Natural killer cell (primary cell): ENCODE measurements at regions of chr9 and their contacts with region 1.

Region 1: GRCh38 chr9:128322404-128323211 is at the starts of genes COQ4 and TRUB2:
- DNase-seq: peak; percentile 88 to 96
- ATAC-seq: peak; percentile 88 to 95 (median 90)
- H3K4me3 ChIP-seq: peak within 1 kb of the TSS; percentile 95
- H3K4me3 Mint-ChIP-seq: peak within 1 kb of the TSS; percentile 95
- H3K27ac ChIP-seq: peak within 1 kb of the TSS; percentile 92
- H3K27ac Mint-ChIP-seq: peak within 1 kb of the TSS; percentile 94 to 95
- H3K4me1 ChIP-seq: peaks cover 28% of the 10 kb centered on the region
- H3K4me1 Mint-ChIP-seq: peaks cover 19 to 20% of the 10 kb centered on the region in 2 donors
- H3K27me3 ChIP-seq: no peaks in the 10 kb centered on the region
- H3K27me3 Mint-ChIP-seq: no peaks in the 10 kb centered on the region
- CTCF ChIP-seq: no peak
- total RNA-seq, gene COQ4: 28.2 to 34.5 (median 30.4) TPM
- total RNA-seq, gene TRUB2: 8.8 to 12.0 (median 11.3) TPM

Region 2: DNA sequence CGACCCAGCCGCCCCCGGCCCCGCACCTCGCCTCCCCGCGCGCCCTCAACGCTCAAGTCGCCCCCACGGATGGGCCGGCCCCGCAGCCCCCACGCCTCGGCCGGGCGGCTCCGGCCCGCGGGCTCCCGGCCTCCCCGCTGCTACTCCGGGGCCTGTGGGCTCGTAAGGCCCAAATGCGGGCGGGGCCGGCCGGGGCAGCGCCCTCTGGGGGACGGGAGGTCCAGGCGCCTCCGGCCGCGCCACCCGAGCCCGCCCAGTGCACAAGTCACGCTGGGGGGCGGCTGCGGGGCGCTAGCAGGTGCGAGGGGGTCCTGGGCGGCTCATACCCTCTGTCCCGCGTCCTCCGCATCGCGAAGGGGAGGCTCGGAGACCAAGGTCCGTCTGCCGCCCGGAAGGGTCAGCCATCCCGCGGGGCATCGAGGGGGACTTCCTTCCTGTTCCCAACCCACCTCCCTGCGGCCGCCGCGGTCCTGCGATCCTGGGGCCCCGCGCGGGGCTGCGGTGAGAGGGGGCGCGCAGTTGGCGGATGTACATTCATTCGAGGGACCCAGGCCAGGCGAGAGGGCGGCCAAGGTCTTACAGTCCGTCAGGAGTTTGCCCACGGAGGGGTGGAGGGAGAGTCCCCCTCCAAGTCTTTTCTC is 131.1 kb before region 1 on chr9 and contains the start of gene CIZ1:
- intact Hi-C with region 1: loop called (anchors 10 kb)
- DNase-seq: peak; percentile 77 to 86
- ATAC-seq: peak; percentile 85 to 96 (median 92)
- H3K4me3 ChIP-seq: peak within 1 kb of the TSS; percentile 83
- H3K4me3 Mint-ChIP-seq: peak within 1 kb of the TSS; percentile 96
- H3K27ac ChIP-seq: peak within 1 kb of the TSS; percentile 63
- H3K27ac Mint-ChIP-seq: peak within 1 kb of the TSS; percentile 82 to 90
- H3K4me1 ChIP-seq: peaks cover 24% of the 10 kb centered on the region
- H3K4me1 Mint-ChIP-seq: peaks cover 13 to 30% of the 10 kb centered on the region in 2 donors
- H3K27me3 ChIP-seq: no peaks in the 10 kb centered on the region
- H3K27me3 Mint-ChIP-seq: no peaks in the 10 kb centered on the region
- CTCF ChIP-seq: peak; percentile 73
- total RNA-seq, gene CIZ1: 152 to 165 (median 159) TPM

Region 3: DNA sequence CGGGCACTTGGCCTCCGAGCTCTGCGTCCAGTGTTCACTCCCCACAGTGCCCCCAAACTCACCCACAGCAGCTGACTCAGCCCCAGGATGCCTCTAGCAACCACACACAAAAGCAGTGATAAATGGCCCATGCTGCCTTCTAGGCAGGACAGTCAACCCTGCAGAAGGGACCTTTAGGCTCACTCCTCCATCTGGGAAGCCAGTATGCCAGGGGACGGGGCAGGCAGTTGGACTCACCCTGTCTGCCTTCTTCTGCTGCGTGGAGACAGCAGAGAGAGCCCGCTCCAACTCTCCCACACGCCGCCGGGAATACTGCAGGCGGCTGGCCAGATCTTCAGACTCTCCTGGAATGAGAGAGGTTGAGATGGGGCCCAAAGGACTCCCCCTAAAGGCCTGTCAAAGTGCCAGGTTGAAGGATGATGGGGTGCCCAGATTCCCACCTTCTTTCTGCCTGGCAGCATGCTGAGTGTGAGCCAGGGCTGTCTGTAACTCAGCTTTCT is 57.2 kb before region 1 on chr9:
- intact Hi-C with region 1: no loop called
- DNase-seq: no peak
- ATAC-seq: no peak
- H3K4me3 ChIP-seq: no peak overlapping the region
- H3K4me3 Mint-ChIP-seq: no peak overlapping the region
- H3K27ac ChIP-seq: no peak overlapping the region
- H3K27ac Mint-ChIP-seq: no peak overlapping the region
- H3K4me1 ChIP-seq: no peaks in the 10 kb centered on the region
- H3K4me1 Mint-ChIP-seq: peaks cover 0 to 6% of the 10 kb centered on the region in 2 donors
- H3K27me3 ChIP-seq: no peaks in the 10 kb centered on the region
- H3K27me3 Mint-ChIP-seq: no peaks in the 10 kb centered on the region
- CTCF ChIP-seq: no peak

Region 4: GRCh38 chr9:128275996-128276573 is 46.5 kb before region 1 on chr9 and contains the starts of genes GOLGA2 and SWI5:
- intact Hi-C with region 1: loop called (anchors 5 kb)
- DNase-seq: peak; percentile 99 to 100
- ATAC-seq: peak; percentile 92 to 99 (median 93)
- H3K4me3 ChIP-seq: peak within 1 kb of the TSS; percentile 71
- H3K4me3 Mint-ChIP-seq: peak within 1 kb of the TSS; percentile 92
- H3K27ac ChIP-seq: peak within 1 kb of the TSS; percentile 80
- H3K27ac Mint-ChIP-seq: peak within 1 kb of the TSS; percentile 91 to 99
- H3K4me1 ChIP-seq: peaks cover 23% of the 10 kb centered on the region
- H3K4me1 Mint-ChIP-seq: peaks cover 21 to 33% of the 10 kb centered on the region in 2 donors
- H3K27me3 ChIP-seq: no peaks in the 10 kb centered on the region
- H3K27me3 Mint-ChIP-seq: peaks cover 0 to 2% of the 10 kb centered on the region in 2 donors
- CTCF ChIP-seq: no peak
- total RNA-seq, gene GOLGA2: 78.0 to 101 (median 90.9) TPM
- total RNA-seq, gene SWI5: 6.3 to 9.3 (median 8.4) TPM

Region 5: DNA sequence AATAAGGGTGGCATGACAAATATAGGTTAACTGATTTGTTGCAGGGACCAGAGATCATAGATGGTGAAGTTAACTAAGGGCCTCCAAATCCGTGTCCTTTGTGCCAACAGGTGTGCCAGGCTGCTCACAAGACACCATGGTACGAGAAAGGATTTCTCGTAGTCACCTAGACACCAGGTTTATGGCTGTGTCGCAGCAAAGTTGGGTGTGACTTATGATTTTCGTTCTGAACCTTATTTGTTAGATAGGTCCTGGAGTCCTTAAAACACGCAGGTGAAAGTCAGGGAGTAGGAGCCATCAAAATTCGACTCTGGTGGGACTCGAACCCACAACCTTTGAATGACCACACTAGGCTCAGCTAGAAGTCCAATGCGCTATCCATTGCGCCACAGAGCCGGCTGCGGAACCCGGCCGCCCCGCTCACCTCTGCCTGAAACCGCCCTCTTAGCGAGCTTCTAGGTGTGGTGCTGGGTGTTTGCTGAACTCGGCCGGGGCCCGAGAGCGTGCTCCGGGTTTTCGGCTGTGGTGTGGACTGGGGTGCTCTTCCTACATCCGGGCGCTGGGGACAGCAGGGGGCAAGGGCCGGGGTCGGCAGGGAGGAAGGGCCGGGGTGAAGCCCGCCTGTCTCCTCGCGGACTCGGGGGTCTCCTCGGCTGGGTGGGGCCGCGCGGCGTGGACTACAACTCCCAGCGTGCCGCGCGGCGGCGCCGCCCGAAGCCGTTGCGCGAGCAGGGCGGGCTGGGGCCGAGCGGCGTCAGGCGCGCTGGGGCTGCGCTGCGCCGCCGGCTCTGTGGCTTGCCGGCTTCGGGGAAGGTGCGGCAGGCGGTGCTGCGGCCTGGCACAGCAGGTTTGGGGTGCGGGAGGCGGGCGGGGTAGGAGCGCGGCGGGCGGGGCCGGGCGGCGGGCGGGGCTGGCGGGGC is 17.4 kb after region 1 on chr9 and contains the start of gene SLC27A4:
- intact Hi-C with region 1: loop called (anchors 1 kb)
- DNase-seq: peak; percentile 64 to 92
- ATAC-seq: peak; percentile 90 to 95 (median 93)
- H3K4me3 ChIP-seq: peak within 1 kb of the TSS; percentile 61
- H3K4me3 Mint-ChIP-seq: peak within 1 kb of the TSS; percentile 83
- H3K27ac ChIP-seq: peak within 1 kb of the TSS; percentile 49
- H3K27ac Mint-ChIP-seq: peak within 1 kb of the TSS; percentile 37 to 75
- H3K4me1 ChIP-seq: peaks cover 15% of the 10 kb centered on the region
- H3K4me1 Mint-ChIP-seq: peaks cover 7% of the 10 kb centered on the region in 2 donors
- H3K27me3 ChIP-seq: no peaks in the 10 kb centered on the region
- H3K27me3 Mint-ChIP-seq: no peaks in the 10 kb centered on the region
- CTCF ChIP-seq: no peak
- total RNA-seq, gene SLC27A4: 7.7 to 12.3 (median 11.2) TPM

Region 6: DNA sequence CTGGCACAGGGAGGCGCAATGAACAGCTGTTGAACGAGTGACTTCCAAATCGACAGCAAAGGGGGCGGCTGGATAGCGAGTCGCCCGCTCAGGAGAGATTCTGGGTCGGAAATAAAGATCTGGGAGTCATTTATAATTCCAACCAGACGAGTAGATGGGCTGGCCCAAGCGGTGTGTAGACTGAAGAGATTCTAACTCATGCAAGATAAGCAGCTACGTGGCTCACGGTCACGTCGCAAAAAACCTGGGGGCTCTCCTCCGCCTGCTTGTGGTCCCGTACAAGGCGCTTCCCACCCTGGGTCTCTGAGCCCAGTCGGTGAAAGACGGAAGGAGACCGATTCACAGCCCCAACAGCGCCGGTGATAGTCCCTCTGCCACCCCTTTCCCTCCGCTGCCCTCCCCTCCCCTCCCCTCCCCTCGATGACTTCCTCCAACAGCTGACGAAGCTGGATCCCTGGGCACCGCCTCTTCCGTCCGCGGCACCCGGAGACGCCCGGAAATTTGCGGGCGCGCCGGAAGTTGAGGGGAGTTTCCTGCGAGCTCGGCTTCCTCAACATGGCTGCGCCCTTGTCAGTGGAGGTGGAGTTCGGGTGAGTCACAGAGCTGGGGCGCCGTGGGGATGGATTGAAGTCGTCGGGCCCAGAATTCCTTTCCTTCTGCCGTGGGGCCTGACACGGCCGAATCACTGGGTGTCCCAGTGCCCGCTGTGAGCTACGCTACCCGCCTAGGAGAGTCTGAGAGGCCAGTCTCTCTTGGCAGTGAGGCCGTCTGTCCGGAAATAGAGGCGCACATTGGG is 48.4 kb after region 1 on chr9 and contains the start of gene URM1:
- intact Hi-C with region 1: loop called (anchors 1 kb)
- DNase-seq: peak; percentile 95 to 98
- ATAC-seq: peak; percentile 94 to 99 (median 96)
- H3K4me3 ChIP-seq: peak within 1 kb of the TSS; percentile 72
- H3K4me3 Mint-ChIP-seq: peak within 1 kb of the TSS; percentile 96
- H3K27ac ChIP-seq: peak within 1 kb of the TSS; percentile 82
- H3K27ac Mint-ChIP-seq: peak within 1 kb of the TSS; percentile 96 to 99
- H3K4me1 ChIP-seq: peaks cover 21% of the 10 kb centered on the region
- H3K4me1 Mint-ChIP-seq: peaks cover 29 to 31% of the 10 kb centered on the region in 2 donors
- H3K27me3 ChIP-seq: no peaks in the 10 kb centered on the region
- H3K27me3 Mint-ChIP-seq: peaks cover 0 to 2% of the 10 kb centered on the region in 2 donors
- CTCF ChIP-seq: no peak
- total RNA-seq, gene URM1: 39.4 to 47.8 (median 46.7) TPM

Region 7: DNA sequence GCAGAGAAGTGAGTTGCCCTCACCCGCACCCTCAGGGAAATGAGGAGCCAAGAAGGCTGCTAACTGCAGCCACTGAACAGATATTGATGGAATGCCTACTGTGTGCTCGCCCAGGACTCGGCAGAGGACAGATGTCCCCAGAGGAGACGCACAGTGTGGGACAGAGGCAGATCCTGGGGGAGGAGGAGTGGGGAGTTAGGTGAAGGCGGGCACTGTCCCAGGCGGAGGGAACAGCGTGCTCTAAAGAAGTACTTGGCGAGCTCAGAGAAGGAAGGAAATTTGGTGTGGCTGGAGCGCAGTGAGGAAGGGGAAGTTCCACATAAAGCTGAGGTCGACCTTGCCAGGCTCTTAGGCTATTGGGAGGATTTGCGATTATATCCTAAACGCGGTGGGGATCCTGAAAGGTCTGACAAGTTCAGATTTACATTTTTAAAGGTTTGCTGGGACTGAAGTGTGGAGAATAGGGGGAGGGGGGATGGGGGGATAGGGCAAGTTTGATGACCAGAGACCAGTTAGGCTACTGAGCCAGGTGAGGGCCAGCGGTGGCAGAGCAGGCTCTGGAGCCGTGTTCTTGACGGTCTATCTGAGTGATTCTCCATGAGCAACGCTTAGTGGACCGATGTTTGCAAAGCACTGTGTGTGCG is 74.5 kb after region 1 on chr9:
- intact Hi-C with region 1: no loop called
- DNase-seq: no peak
- ATAC-seq: peak in 1 of 3 donors; percentile 15
- H3K4me3 ChIP-seq: no peak overlapping the region
- H3K4me3 Mint-ChIP-seq: no peak overlapping the region
- H3K27ac ChIP-seq: no peak overlapping the region
- H3K27ac Mint-ChIP-seq: peak overlapping the region in 1 of 2 donors; percentile 13
- H3K4me1 ChIP-seq: peaks cover 2% of the 10 kb centered on the region
- H3K4me1 Mint-ChIP-seq: peaks cover 0 to 7% of the 10 kb centered on the region in 2 donors
- H3K27me3 ChIP-seq: no peaks in the 10 kb centered on the region
- H3K27me3 Mint-ChIP-seq: no peaks in the 10 kb centered on the region
- CTCF ChIP-seq: no peak